ENCODE measurements at regions of chr6 and their contacts with region 1.

Region 1: DNA sequence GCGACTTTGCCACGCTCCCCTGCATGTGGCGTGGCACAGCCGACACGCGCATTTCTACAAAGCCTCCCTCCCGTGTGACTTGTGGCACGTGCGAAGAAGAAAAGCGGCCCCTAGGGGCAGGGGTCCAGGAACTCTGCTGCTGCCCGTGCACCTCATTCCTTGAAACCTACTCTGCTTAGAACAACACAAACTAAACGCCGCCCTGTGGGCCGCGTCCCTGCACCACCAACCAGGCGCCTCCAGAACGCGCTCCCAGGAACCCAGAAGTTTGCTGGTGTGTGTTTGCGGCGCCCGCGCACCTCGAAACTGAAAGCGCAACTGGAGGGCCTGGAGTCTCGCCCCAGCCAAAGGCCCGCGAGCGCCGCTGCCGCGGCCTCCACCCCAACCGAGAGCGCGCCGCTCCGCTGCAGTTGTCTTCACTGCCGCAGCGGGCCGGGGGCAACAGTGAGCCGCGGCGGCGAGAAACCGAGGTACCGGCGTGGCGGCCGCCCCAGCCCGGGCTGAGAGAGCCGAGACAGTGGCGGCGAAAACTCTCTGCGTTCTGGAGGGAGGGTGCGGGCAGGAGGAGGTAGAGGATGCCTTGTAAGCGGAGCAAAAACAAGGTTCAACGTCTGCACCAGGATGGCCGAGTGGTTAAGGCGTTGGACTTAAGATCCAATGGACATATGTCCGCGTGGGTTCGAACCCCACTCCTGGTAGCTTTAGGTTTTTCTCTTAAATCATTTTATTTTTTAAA is 65.8 kb downstream of the STX11 start:
- DNase-seq: peak; percentile 93 to 98
- H3K4me3 ChIP-seq: peak overlapping the region; percentile 60 to 79 (median 68)
- H3K27ac ChIP-seq: peak overlapping the region; percentile 49; the same call in 1 of the 2 replicates
- H3K4me1 ChIP-seq: peaks cover 2 to 9% (median 7%) of the 10 kb centered on the region in 4 experiments; a peak in 6 of 7 replicates
- H3K27me3 ChIP-seq: no peaks in the 10 kb centered on the region; a peak in 1 of 7 replicates
- CTCF ChIP-seq: peak; percentile 70 to 74 (median 72)
- EP300 ChIP-seq: 0 out of 3 replicates have a peak, but pooled peaks of 1 of the 2 experiments have one; percentile 13
- POLR2A ChIP-seq: peak in 1 of 2 experiments; percentile 56; a peak in 2 of 3 replicates
- RAD21 ChIP-seq: peak; percentile 76 to 83

Region 2: DNA sequence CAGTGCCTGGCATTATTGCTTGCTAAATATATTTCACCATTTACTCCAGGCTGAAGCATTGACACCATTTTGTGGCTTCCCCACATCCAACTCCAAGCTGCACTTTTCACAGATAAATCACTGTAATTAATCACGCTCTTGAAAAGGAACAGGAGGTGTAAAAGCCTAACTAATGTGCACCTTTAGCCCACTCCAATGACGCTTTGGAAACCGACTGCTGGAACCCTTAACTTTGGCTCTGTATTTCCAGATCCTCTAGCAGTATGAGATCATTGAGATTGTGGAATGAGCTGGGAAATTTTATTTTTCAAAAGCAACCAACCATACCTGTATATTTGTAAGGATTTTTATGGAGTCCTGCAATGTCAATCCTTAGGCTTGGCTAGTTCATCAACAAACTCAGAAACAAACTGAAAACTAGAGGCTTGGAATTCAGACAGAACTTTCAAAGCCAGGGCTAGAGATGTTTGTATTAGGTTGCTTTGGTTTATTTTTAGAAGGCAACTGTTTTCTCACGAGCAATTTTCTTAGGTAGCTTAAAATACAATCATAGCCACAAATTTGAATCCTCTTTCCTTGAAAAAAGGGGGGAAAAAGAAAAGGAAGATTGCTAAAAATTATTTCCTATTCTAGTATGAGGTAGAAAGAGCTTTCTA is 16.2 kb after region 1 on chr6:
- CTCF ChIA-PET with region 1: interaction called, 33 read pairs
- POLR2A ChIA-PET with region 1: interaction called, 4 read pairs
- DNase-seq: no peak
- H3K4me3 ChIP-seq: no peak overlapping the region
- H3K27ac ChIP-seq: no peak overlapping the region
- H3K4me1 ChIP-seq: peaks cover 0 to 9% (median 4%) of the 10 kb centered on the region in 4 experiments; a peak in 3 of 7 replicates
- H3K27me3 ChIP-seq: no peaks in the 10 kb centered on the region
- CTCF ChIP-seq: no peak
- EP300 ChIP-seq: no peak
- POLR2A ChIP-seq: no peak
- RAD21 ChIP-seq: no peak

Region 3: GRCh38 chr6:144265390-144265789 is 49.3 kb after region 1 on chr6:
- CTCF ChIA-PET with region 1: interaction called, 18 read pairs
- POLR2A ChIA-PET with region 1: interaction called, 3 read pairs
- DNase-seq: no peak
- H3K4me3 ChIP-seq: peak overlapping the region in 1 of 4 experiments; percentile 49; a peak in 3 of 8 replicates
- H3K27ac ChIP-seq: no peak overlapping the region
- H3K4me1 ChIP-seq: peaks cover 0 to 14% (median 10%) of the 10 kb centered on the region in 4 experiments; a peak in 4 of 7 replicates
- H3K27me3 ChIP-seq: no peaks in the 10 kb centered on the region
- CTCF ChIP-seq: no peak
- EP300 ChIP-seq: no peak
- POLR2A ChIP-seq: no peak
- RAD21 ChIP-seq: 0 out of 4 replicates have a peak, but pooled peaks of 1 of the 2 experiments have one; percentile 0

Region 4: GRCh38 chr6:144321839-144322591 is 105.9 kb after region 1 on chr6:
- CTCF ChIA-PET with region 1: interaction called, 10 read pairs
- POLR2A ChIA-PET with region 1: no interaction called
- DNase-seq: no peak
- H3K4me3 ChIP-seq: no peak overlapping the region
- H3K27ac ChIP-seq: no peak overlapping the region
- H3K4me1 ChIP-seq: peaks cover 0 to 18% (median 16%) of the 10 kb centered on the region in 4 experiments; a peak in 4 of 7 replicates
- H3K27me3 ChIP-seq: no peaks in the 10 kb centered on the region
- CTCF ChIP-seq: no peak
- EP300 ChIP-seq: no peak
- POLR2A ChIP-seq: no peak
- RAD21 ChIP-seq: no peak